MCF 10A (cell line): ENCODE measurements at regions of chr1 and their contacts with region 1.

Region 1: GRCh38 chr1:149962123-149962548 is 25.5 kb upstream of the MTMR11 start:
- DNase-seq: peak; percentile 85
- H3K4me3 Mint-ChIP-seq: no peak overlapping the region
- H3K27ac Mint-ChIP-seq: peak overlapping the region; percentile 33
- H3K4me1 Mint-ChIP-seq: peaks cover 22% of the 10 kb centered on the region
- H3K27me3 Mint-ChIP-seq: no peaks in the 10 kb centered on the region
- CTCF ChIP-seq: peak; percentile 88

Region 2: GRCh38 chr1:149942207-149942606 is 19.9 kb before region 1 on chr1:
- CTCF ChIA-PET with region 1: interaction called, 15 read pairs
- POLR2A ChIA-PET with region 1: interaction called, 6 read pairs
- intact Hi-C with region 1: no loop called
- DNase-seq: peak; percentile 28
- H3K4me3 Mint-ChIP-seq: no peak overlapping the region
- H3K27ac Mint-ChIP-seq: no peak overlapping the region
- H3K4me1 Mint-ChIP-seq: peaks cover 36% of the 10 kb centered on the region
- H3K27me3 Mint-ChIP-seq: no peaks in the 10 kb centered on the region
- CTCF ChIP-seq: no peak

Region 3: DNA sequence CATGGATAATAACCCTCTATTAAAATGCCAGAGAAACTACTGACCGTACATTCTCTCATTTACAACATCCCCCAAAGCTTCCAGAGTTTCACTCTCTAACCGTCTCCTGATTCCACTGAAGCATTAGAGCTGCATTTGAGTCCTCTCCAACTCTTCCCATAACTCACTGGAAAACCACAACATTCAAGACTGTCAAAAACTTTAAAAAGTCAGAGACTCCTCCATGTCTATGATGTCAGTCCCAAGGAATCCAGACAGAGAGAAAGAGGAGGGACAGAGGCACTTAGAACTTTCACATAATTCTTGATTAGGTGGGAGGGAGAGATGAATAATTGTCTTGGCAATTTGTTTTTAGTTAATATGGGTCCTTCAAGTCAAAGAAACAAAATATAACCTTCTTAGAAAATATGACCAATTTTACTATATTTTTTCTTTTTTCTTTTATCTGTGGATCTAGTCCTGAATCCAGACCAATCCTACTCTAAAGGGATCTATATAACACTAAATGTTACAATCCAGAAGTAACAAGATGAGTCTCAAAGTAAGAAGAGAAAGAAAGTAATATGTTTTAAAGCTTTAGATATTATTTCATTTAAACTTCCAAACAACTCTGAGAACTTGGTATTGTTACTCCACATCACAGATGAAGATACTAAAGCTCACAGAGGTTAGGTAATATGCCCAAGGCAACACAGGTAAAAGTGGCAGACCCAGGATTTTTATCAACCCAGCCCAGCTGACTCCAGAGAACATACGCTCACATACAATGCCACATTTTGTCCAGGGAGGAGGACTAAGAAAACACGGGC is 24.6 kb after region 1 on chr1:
- CTCF ChIA-PET with region 1: interaction called, 10 read pairs
- POLR2A ChIA-PET with region 1: no interaction called
- intact Hi-C with region 1: no loop called
- DNase-seq: peak; percentile 46
- H3K4me3 Mint-ChIP-seq: no peak overlapping the region
- H3K27ac Mint-ChIP-seq: peak overlapping the region; percentile 6
- H3K4me1 Mint-ChIP-seq: peaks cover 29% of the 10 kb centered on the region
- H3K27me3 Mint-ChIP-seq: no peaks in the 10 kb centered on the region
- CTCF ChIP-seq: no peak

Region 4: GRCh38 chr1:150021191-150021694 is 59.1 kb after region 1 on chr1:
- CTCF ChIA-PET with region 1: interaction called, 13 read pairs
- POLR2A ChIA-PET with region 1: interaction called, 3 read pairs
- intact Hi-C with region 1: no loop called
- DNase-seq: no peak
- H3K4me3 Mint-ChIP-seq: no peak overlapping the region
- H3K27ac Mint-ChIP-seq: peak overlapping the region; percentile 65
- H3K4me1 Mint-ChIP-seq: peaks cover 10% of the 10 kb centered on the region
- H3K27me3 Mint-ChIP-seq: no peaks in the 10 kb centered on the region
- CTCF ChIP-seq: no peak

Region 5: DNA sequence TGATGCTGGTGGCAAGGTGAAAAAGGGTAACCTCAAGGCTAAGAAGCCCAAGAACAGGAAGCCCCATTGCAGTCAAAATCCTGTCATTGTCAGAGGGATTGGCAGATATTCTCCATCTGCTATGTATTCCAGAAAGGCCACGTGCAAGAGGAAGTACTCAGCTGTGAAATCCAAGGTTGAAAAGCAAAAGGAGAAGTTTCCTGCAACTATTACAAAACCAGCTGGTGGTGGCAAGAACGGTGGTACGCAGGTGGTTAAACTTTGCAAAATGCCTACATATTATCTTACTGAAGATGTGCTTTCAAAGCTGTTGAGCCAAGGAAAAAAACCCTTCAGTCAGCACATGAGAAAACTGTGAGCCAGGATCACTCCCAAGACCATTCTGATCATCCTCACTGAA is 91.8 kb after region 1 on chr1:
- CTCF ChIA-PET with region 1: interaction called, 103 read pairs
- POLR2A ChIA-PET with region 1: interaction called, 18 read pairs
- intact Hi-C with region 1: loop called (anchors 1 kb)
- DNase-seq: no peak
- H3K4me3 Mint-ChIP-seq: no peak overlapping the region
- H3K27ac Mint-ChIP-seq: no peak overlapping the region
- H3K4me1 Mint-ChIP-seq: peaks cover 7% of the 10 kb centered on the region
- H3K27me3 Mint-ChIP-seq: no peaks in the 10 kb centered on the region
- CTCF ChIP-seq: no peak

Region 6: DNA sequence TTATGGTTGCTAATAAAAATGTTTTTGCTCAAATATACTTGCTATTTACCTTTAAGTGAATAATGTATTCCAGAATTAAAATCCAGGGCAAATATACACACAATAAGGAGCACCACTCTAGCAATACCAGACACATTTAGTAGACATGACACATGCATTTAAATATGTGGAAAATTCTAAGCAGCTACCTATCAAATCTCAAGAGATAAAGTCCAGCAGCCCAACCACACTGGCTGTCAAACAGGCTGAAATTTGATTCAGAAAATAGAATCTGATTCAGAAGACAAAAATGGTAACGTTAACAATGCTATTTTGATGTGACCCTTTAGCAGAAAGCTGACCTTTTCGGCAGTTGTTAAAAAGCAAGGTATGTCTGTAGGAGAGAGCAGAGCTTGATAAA is 229.9 kb after region 1 on chr1:
- CTCF ChIA-PET with region 1: interaction called, 48 read pairs
- POLR2A ChIA-PET with region 1: interaction called, 3 read pairs
- intact Hi-C with region 1: loop called (anchors 1 kb)
- DNase-seq: no peak
- H3K4me3 Mint-ChIP-seq: no peak overlapping the region
- H3K27ac Mint-ChIP-seq: no peak overlapping the region
- H3K4me1 Mint-ChIP-seq: peaks cover 7% of the 10 kb centered on the region
- H3K27me3 Mint-ChIP-seq: no peaks in the 10 kb centered on the region
- CTCF ChIP-seq: no peak